CD4-positive, alpha-beta T cell (primary cell): ENCODE measurements at regions of chr6 and their contacts with region 1.

Region 1: GRCh38 chr6:137927777-137928218 is 60.7 kb downstream of the TNFAIP3 start:
- DNase-seq: peak; percentile 32 to 93 (median 53)
- ATAC-seq: peak; percentile 99
- H3K4me3 ChIP-seq: no peak overlapping the region
- H3K4me3 Mint-ChIP-seq: peak overlapping the region; percentile 9
- H3K27ac ChIP-seq: peak overlapping the region in 1 of 2 donors; percentile 18
- H3K27ac Mint-ChIP-seq: peak overlapping the region; percentile 70
- H3K4me1 ChIP-seq: peaks cover 26% of the 10 kb centered on the region
- H3K4me1 Mint-ChIP-seq: peaks cover 45% of the 10 kb centered on the region
- H3K27me3 ChIP-seq: no peaks in the 10 kb centered on the region
- H3K27me3 Mint-ChIP-seq: no peaks in the 10 kb centered on the region
- CTCF ChIP-seq: no peak

Region 2: GRCh38 chr6:137878486-137879285 is 49.1 kb before region 1 on chr6:
- CTCF ChIA-PET with region 1: no interaction called
- POLR2A ChIA-PET with region 1: interaction called, 5 read pairs
- intact Hi-C with region 1: loop called in 1 of 2 experiments (anchors 5 kb)
- DNase-seq: peak in 4 of 14 experiments; percentile 22 to 62 (median 46)
- ATAC-seq: no peak
- H3K4me3 ChIP-seq: no peak overlapping the region
- H3K4me3 Mint-ChIP-seq: peak overlapping the region; percentile 76
- H3K27ac ChIP-seq: peak overlapping the region in 1 of 2 donors; percentile 37
- H3K27ac Mint-ChIP-seq: peak overlapping the region; percentile 95
- H3K4me1 ChIP-seq: peaks cover 68% of the 10 kb centered on the region
- H3K4me1 Mint-ChIP-seq: peaks cover 88% of the 10 kb centered on the region
- H3K27me3 ChIP-seq: no peaks in the 10 kb centered on the region
- H3K27me3 Mint-ChIP-seq: peaks cover 8% of the 10 kb centered on the region
- CTCF ChIP-seq: no peak

Region 3: DNA sequence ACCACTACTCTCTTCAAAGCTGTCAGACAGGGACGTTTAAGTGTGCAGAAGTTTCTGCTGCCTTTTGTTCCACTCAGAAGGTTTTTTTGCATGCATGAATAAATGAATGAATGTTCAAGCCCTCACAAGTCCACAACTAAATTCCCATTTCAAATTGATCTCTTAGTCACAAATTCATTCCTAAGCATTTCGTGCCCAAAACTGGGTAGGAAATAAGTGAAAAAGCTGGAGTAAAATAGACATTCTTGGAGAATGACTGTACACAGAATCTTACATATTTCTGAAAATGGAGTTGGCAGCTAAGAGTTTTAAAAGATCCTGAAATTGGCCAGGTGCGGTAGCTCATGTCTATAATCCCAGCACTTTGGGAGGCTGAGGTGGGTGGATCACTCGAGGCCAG is 61.9 kb after region 1 on chr6:
- CTCF ChIA-PET with region 1: no interaction called
- POLR2A ChIA-PET with region 1: no interaction called
- intact Hi-C with region 1: no loop called
- DNase-seq: no peak
- ATAC-seq: no peak
- H3K4me3 ChIP-seq: no peak overlapping the region
- H3K4me3 Mint-ChIP-seq: no peak overlapping the region
- H3K27ac ChIP-seq: no peak overlapping the region
- H3K27ac Mint-ChIP-seq: no peak overlapping the region
- H3K4me1 ChIP-seq: no peaks in the 10 kb centered on the region
- H3K4me1 Mint-ChIP-seq: no peaks in the 10 kb centered on the region
- H3K27me3 ChIP-seq: peaks cover 0 to 6% of the 10 kb centered on the region in 2 experiments
- H3K27me3 Mint-ChIP-seq: peaks cover 16% of the 10 kb centered on the region
- CTCF ChIP-seq: no peak

Region 4: DNA sequence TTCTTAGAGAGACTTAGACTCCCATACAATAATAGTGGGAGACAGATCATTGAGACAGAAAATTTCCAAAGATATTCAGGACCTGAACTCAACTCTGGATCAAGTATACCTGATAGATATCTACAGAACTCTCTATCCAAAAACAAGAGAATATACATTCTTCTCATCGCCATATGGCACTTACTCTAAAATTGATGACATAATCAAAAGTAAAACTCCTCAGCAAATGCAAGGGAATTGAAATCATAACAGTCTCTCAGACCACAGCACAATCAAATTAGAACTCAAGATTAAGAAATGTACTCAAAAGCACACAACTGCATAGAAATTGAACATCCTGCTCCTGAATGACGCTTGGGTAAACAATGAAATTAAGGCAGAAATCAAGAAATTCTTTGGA is 150.7 kb after region 1 on chr6:
- CTCF ChIA-PET with region 1: no interaction called
- POLR2A ChIA-PET with region 1: no interaction called
- intact Hi-C with region 1: no loop called
- DNase-seq: no peak
- ATAC-seq: no peak
- H3K4me3 ChIP-seq: no peak overlapping the region
- H3K4me3 Mint-ChIP-seq: no peak overlapping the region
- H3K27ac ChIP-seq: no peak overlapping the region
- H3K27ac Mint-ChIP-seq: no peak overlapping the region
- H3K4me1 ChIP-seq: no peaks in the 10 kb centered on the region
- H3K4me1 Mint-ChIP-seq: no peaks in the 10 kb centered on the region
- H3K27me3 ChIP-seq: peaks cover 0 to 6% of the 10 kb centered on the region in 2 experiments
- H3K27me3 Mint-ChIP-seq: peaks cover 72% of the 10 kb centered on the region
- CTCF ChIP-seq: no peak